Kidney (tissue), 22 donors: ENCODE measurements at regions of chr15 and their contacts with region 1.

Region 1: GRCh38 chr15:57205996-57206395 is 170.3 kb upstream of the CGNL1 start:
- DNase-seq: no peak
- H3K4me3 ChIP-seq: no peak overlapping the region
- H3K27ac ChIP-seq: no peak overlapping the region
- H3K4me1 ChIP-seq: no peaks in the 10 kb centered on the region
- H3K27me3 ChIP-seq: no peaks in the 10 kb centered on the region
- CTCF ChIP-seq: no peak

Region 2: GRCh38 chr15:56984681-56985481 is 221.1 kb before region 1 on chr15:
- intact Hi-C with region 1: loop called (anchors 10 kb)
- DNase-seq: peak in 2 of 5 donors; percentile 20 to 49
- H3K4me3 ChIP-seq: no peak overlapping the region
- H3K27ac ChIP-seq: no peak overlapping the region
- H3K4me1 ChIP-seq: peaks cover 5 to 42% (median 14%) of the 10 kb centered on the region in 3 donors
- H3K27me3 ChIP-seq: no peaks in the 10 kb centered on the region
- CTCF ChIP-seq: no peak